ENCODE measurements at regions of chr5 and their contacts with region 1.

Region 1: GRCh38 chr5:172932313-172933017 is 26.8 kb upstream of the RPL26L1 start:
- DNase-seq: peak; percentile 86
- CTCF ChIP-seq: peak; percentile 96

Region 2: DNA sequence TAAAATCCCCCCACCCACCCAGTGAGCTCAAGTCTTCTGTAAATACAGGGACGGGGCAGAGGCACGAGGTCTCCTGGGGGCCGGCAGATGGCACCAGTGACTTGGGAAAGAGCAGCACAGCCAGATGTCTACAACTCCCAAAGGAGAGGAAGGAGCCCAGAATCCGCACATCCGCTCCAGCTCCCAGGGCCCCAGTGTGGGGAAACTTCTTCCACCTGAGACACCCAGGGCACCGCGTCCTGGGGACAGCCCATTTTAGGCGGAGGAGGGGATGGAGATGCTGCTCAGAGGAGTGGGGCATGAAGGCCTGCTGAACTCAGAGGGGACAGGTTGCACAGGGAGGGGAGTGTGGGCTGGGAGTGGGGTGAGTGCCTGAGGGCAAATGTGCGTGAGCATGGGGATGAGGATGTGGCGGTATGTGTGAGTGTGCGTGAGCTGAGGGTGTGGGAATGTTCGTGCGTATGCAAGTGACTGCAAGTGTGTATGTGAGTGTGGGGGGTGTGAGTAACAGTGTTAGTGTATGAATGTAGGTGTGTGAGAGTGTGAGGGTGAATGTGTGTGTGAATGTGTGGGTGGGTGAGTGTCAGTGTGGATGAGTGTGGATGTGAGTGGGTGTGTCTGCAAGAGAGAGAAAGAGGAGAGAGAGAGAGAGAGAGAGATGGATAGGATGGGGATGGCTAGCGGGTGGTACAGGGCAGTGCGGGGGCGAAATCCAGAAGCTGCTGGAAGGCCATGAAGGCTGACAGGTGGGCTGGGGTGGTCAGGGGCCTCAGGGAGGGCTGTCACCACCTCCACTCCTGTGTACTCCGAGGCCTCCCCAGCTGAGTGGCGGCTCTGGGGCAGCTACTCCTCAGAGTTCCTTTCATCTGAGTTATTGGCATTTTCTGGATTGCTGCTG is 224.9 kb before region 1 on chr5:
- CTCF ChIA-PET with region 1: interaction called, 282 read pairs
- POLR2A ChIA-PET with region 1: no interaction called
- DNase-seq: no peak
- CTCF ChIP-seq: peak; percentile 53

Region 3: GRCh38 chr5:172733131-172733973 is 199.1 kb before region 1 on chr5:
- CTCF ChIA-PET with region 1: interaction called, 11 read pairs
- POLR2A ChIA-PET with region 1: no interaction called
- DNase-seq: no peak
- CTCF ChIP-seq: no peak

Region 4: DNA sequence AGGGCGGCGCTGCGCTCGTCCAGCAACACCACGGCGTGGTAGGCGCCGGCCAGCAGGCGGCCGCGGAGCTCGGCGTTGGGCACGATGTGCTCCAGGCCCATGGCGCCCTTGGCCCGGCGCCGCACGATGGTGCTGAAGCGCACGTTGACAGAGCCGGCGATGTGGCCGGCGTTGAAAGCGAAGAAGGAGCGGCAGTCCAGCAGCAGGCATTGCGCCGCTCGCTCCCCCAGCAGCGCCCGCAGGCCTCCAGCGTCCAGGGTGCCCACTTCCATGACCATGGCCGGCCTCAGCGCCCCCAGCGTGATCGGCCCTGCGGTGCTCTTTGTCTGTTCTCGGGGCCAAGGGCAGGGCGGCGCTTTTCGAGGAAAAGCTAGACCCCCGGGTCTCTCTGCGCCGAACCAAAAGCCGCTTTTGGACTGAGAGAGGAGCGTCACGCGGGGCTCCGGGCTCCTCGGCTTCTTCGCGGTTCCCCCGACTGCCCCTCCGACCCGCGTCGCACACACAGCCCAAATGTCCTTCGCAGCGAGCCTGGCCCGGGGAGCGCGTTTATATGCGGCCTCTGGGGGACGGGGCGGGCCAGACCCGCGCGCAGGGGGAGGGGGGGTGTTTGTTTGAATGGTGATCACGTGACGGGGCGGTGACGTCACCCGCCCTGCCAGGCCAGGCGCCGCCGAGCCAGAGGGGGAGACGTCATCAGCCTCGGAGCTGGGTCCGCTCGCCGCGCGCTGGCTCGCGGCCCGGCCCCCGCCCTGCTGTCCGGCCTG is 161.6 kb before region 1 on chr5 and contains the start of gene DUSP1:
- CTCF ChIA-PET with region 1: interaction called, 11 read pairs
- POLR2A ChIA-PET with region 1: no interaction called
- DNase-seq: peak; percentile 97
- CTCF ChIP-seq: peak; percentile 68

Region 5: GRCh38 chr5:172920447-172920849 is 12.0 kb before region 1 on chr5:
- CTCF ChIA-PET with region 1: interaction called, 28 read pairs
- POLR2A ChIA-PET with region 1: no interaction called
- DNase-seq: no peak
- CTCF ChIP-seq: no peak

Region 6: GRCh38 chr5:172958331-172959046 is 26.0 kb after region 1 on chr5:
- CTCF ChIA-PET with region 1: interaction called, 10 read pairs
- POLR2A ChIA-PET with region 1: no interaction called
- DNase-seq: peak; percentile 93
- CTCF ChIP-seq: no peak